ENCODE measurements at regions of chr4 and their contacts with region 1.

Region 1: GRCh38 chr4:121726642-121727268 is 30.0 kb upstream of the ANXA5 start:
- DNase-seq: no peak
- H3K4me3 Mint-ChIP-seq: no peak overlapping the region
- H3K27ac Mint-ChIP-seq: no peak overlapping the region
- H3K4me1 Mint-ChIP-seq: peaks cover 9% of the 10 kb centered on the region
- H3K27me3 Mint-ChIP-seq: peaks cover 6% of the 10 kb centered on the region

Region 2: GRCh38 chr4:121122661-121123060 is 604.1 kb before region 1 on chr4:
- intact Hi-C with region 1: no loop called
- DNase-seq: no peak
- H3K4me3 Mint-ChIP-seq: no peak overlapping the region
- H3K27ac Mint-ChIP-seq: no peak overlapping the region
- H3K4me1 Mint-ChIP-seq: peaks cover 30% of the 10 kb centered on the region
- H3K27me3 Mint-ChIP-seq: peaks cover 13% of the 10 kb centered on the region

Region 3: DNA sequence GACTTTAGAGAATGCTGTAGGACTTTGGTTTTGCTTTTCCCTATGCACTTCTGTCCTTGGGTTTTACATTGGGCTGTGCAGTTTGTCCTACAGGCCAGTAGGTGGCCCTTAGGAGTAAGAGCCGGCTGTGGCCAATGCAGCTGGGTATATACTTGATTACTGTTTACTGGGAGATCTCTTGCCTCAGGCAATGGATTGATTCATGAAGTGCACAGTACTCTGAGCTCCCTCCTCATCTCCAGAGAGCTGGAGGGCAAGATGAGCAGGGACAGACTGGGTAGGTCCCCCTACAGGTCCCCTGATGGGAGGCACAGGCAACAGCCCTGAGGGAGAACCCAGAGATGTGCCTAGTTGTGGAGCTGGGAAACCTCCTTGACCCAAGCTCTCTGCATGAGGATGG is 242.1 kb before region 1 on chr4:
- intact Hi-C with region 1: loop called (anchors 5 kb)
- DNase-seq: no peak
- H3K4me3 Mint-ChIP-seq: no peak overlapping the region
- H3K27ac Mint-ChIP-seq: no peak overlapping the region
- H3K4me1 Mint-ChIP-seq: no peaks in the 10 kb centered on the region
- H3K27me3 Mint-ChIP-seq: peaks cover 30% of the 10 kb centered on the region

Region 4: GRCh38 chr4:121696581-121697461 is 29.9 kb before region 1 on chr4 and contains the start of gene ANXA5:
- intact Hi-C with region 1: loop called (anchors 1 kb)
- DNase-seq: peak; percentile 73
- H3K4me3 Mint-ChIP-seq: peak within 1 kb of the TSS; percentile 97
- H3K27ac Mint-ChIP-seq: peak within 1 kb of the TSS; percentile 97
- H3K4me1 Mint-ChIP-seq: peaks cover 35% of the 10 kb centered on the region
- H3K27me3 Mint-ChIP-seq: peaks cover 41% of the 10 kb centered on the region
- total RNA-seq, gene ANXA5: 105 and 107 TPM in 2 replicates

Measured in activated T-helper 2 cell treated with anti-CD3 and anti-CD28 coated beads, Interferon-gamma antibody, Interleukin-2, Interleukin-4, amounts not matched to agents 10 μg/mL and 5 μg/mL and 100 μg/mL, durations not matched to agents 14 hours and 24 hours and 36 hours (primary cell).